ENCODE measurements at regions of chr21 and their contacts with region 1.

Region 1: DNA sequence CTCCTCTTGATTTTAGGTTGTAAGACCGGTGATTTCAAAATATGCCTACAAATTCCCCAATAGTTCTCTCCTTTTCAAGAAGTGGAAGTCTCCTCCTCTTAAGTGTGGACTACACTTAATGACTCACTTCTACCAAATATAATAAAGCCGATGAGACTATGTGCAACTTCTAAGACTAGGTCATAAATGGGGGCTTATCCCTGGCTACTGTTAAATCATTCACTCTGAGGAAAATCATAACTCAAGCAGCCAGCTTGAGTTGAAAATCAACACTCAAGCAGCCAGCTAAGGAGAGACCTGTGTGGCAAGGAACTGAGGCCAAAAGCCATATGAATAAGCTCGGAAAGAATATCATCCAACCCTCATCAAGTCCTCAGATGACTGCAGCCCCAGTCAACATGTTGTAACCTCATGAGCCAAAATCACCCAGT is 49.6 kb upstream of the PSMG1 start:
- DNase-seq: no peak
- ATAC-seq: no peak
- H3K4me3 ChIP-seq: no peak overlapping the region
- H3K4me3 Mint-ChIP-seq: no peak overlapping the region
- H3K27ac ChIP-seq: no peak overlapping the region
- H3K27ac Mint-ChIP-seq: no peak overlapping the region
- H3K4me1 ChIP-seq: no peaks in the 10 kb centered on the region
- H3K4me1 Mint-ChIP-seq: peaks cover 4% of the 10 kb centered on the region
- H3K27me3 ChIP-seq: no peaks in the 10 kb centered on the region
- H3K27me3 Mint-ChIP-seq: no peaks in the 10 kb centered on the region
- CTCF ChIP-seq: no peak

Region 2: DNA sequence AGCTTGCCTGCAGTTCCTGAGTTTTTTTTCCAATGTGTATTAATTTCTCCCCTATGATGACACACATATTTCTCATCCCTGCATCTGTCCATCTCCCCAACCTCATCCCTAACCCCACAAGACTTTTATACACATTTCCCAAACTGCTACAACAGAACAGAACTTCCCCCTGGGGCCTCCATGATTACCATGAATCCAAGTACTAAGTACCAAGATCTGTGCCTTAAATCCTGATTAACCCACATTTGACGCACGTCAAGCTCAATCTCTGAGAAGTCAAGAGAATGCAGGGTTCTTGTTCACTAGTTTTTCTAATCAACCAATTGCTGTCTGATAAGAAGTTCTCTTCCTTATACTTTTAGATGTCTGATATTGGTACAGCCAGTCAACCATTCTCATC is 106.4 kb after region 1 on chr21:
- CTCF ChIA-PET with region 1: no interaction called
- POLR2A ChIA-PET with region 1: no interaction called
- intact Hi-C with region 1: loop called in 1 of 2 experiments (anchors 1 kb)
- DNase-seq: no peak
- ATAC-seq: no peak
- H3K4me3 ChIP-seq: no peak overlapping the region
- H3K4me3 Mint-ChIP-seq: no peak overlapping the region
- H3K27ac ChIP-seq: no peak overlapping the region
- H3K27ac Mint-ChIP-seq: no peak overlapping the region
- H3K4me1 ChIP-seq: no peaks in the 10 kb centered on the region
- H3K4me1 Mint-ChIP-seq: no peaks in the 10 kb centered on the region
- H3K27me3 ChIP-seq: no peaks in the 10 kb centered on the region
- H3K27me3 Mint-ChIP-seq: no peaks in the 10 kb centered on the region
- CTCF ChIP-seq: no peak